Activated CD4-positive, alpha-beta T cell treated with anti-CD3 and anti-CD28 coated beads, Interleukin-2, amount 10 ng/mL, durations not matched to agents 7 days and 5 days (primary cell): ENCODE measurements at regions of chr9 and their contacts with region 1.

Region 1: GRCh38 chr9:35675732-35676392 is 2.1 kb downstream of the CA9 start:
- DNase-seq: no peak
- H3K4me3 Mint-ChIP-seq: no peak overlapping the region
- H3K27ac Mint-ChIP-seq: no peak overlapping the region
- H3K4me1 Mint-ChIP-seq: peaks cover 14% of the 10 kb centered on the region
- H3K27me3 Mint-ChIP-seq: peaks cover 28% of the 10 kb centered on the region

Region 2: GRCh38 chr9:35603987-35604577 is 71.8 kb before region 1 on chr9:
- CTCF ChIA-PET with region 1: no interaction called
- POLR2A ChIA-PET with region 1: no interaction called
- DNase-seq: peak; percentile 100
- H3K4me3 Mint-ChIP-seq: peak overlapping the region; percentile 91
- H3K27ac Mint-ChIP-seq: peak overlapping the region; percentile 97
- H3K4me1 Mint-ChIP-seq: peaks cover 37% of the 10 kb centered on the region
- H3K27me3 Mint-ChIP-seq: no peaks in the 10 kb centered on the region

Region 3: GRCh38 chr9:35664531-35665470 is 11.1 kb before region 1 on chr9 and contains the start of gene ARHGEF39:
- CTCF ChIA-PET with region 1: interaction called, 12 read pairs
- POLR2A ChIA-PET with region 1: no interaction called
- DNase-seq: peak; percentile 76
- H3K4me3 Mint-ChIP-seq: peak within 1 kb of the TSS; percentile 85
- H3K27ac Mint-ChIP-seq: peak within 1 kb of the TSS; percentile 88
- H3K4me1 Mint-ChIP-seq: peaks cover 64% of the 10 kb centered on the region
- H3K27me3 Mint-ChIP-seq: no peaks in the 10 kb centered on the region
- total RNA-seq, gene ARHGEF39: 11.8 to 13.5 TPM